RWPE1 (cell line): ENCODE measurements at regions of chr10 and their contacts with region 1.

Region 1: DNA sequence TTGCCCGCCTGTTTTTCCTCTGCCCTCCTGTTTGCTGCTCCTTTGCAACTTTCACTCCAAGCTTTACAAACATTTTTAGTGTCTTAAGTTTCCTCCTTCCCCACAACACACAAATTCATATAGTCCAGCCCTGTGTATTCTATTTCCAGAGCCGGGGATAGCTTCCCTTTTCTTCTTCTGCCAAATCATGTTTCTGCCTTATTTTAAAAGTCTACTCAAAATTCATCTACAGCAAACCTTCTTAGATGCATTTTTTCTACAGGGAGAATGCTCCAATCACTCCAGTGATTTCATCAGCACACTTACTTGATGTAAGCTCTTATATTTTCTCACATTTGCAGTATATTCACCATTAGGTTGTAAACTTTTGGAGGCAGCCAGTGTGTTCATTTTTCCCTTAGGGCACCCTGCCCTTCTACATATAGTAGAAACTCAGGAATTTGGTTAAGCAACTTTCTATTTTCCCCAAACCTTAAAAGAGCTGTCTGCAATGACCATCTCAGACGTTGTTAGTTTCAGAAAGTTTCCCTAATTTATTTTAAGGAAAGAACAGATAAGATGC is 12.4 kb upstream of the ACTA2 start:
- DNase-seq: no peak
- H3K27ac ChIP-seq: no peak overlapping the region
- CTCF ChIP-seq: no peak

Region 2: GRCh38 chr10:88707429-88708285 is 257.3 kb before region 1 on chr10:
- CTCF ChIA-PET with region 1: no interaction called
- POLR2A ChIA-PET with region 1: no interaction called
- DNase-seq: peak; percentile 81
- H3K27ac ChIP-seq: no peak overlapping the region
- CTCF ChIP-seq: no peak

Region 3: GRCh38 chr10:88990384-88991160 is 25.6 kb after region 1 on chr10 and contains the start of gene FAS:
- CTCF ChIA-PET with region 1: interaction called, 14 read pairs
- POLR2A ChIA-PET with region 1: no interaction called
- DNase-seq: peak; percentile 89
- H3K27ac ChIP-seq: peak within 1 kb of the TSS; percentile 100
- CTCF ChIP-seq: no peak